ENCODE measurements at regions of chr2 and their contacts with region 1.

Region 1: GRCh38 chr2:99615247-99615771 is 125.5 kb upstream of the REV1 start:
- DNase-seq: peak; percentile 47
- ATAC-seq: peak; percentile 72
- H3K4me3 Mint-ChIP-seq: no peak overlapping the region
- H3K27ac Mint-ChIP-seq: no peak overlapping the region
- H3K4me1 Mint-ChIP-seq: no peaks in the 10 kb centered on the region
- H3K27me3 Mint-ChIP-seq: no peaks in the 10 kb centered on the region; the same call in 1 of the 2 replicates
- CTCF ChIP-seq: no peak

Region 2: DNA sequence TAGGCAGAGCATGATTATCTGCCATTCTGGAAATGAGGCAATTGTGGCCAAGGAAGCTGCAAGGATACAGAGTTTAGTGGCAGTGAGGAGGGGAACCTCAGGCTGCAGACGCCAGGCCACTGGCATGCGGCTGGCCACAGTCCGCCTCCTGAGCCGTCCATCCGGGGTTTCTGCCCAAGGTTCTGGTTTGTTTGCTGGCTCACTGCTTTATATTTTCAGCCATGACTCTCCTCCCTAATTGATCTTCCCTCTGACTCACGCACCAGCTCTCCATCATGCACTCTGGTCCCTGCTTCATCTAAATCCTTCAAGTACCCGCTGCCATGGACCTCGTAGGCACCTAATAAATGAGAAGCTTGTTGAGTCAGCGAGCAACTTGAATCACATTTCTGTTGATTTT is 17.7 kb before region 1 on chr2:
- CTCF ChIA-PET with region 1: interaction called, 15 read pairs
- POLR2A ChIA-PET with region 1: no interaction called
- DNase-seq: no peak
- ATAC-seq: no peak
- H3K4me3 Mint-ChIP-seq: no peak overlapping the region
- H3K27ac Mint-ChIP-seq: no peak overlapping the region
- H3K4me1 Mint-ChIP-seq: 0 out of 2 replicates have a peak, but pooled peaks cover 6% of the 10 kb centered on the region
- H3K27me3 Mint-ChIP-seq: no peaks in the 10 kb centered on the region
- CTCF ChIP-seq: no peak

Region 3: GRCh38 chr2:99636144-99637034 is 21.1 kb after region 1 on chr2:
- CTCF ChIA-PET with region 1: no interaction called
- POLR2A ChIA-PET with region 1: no interaction called
- DNase-seq: no peak
- ATAC-seq: no peak
- H3K4me3 Mint-ChIP-seq: no peak overlapping the region
- H3K27ac Mint-ChIP-seq: no peak overlapping the region
- H3K4me1 Mint-ChIP-seq: no peaks in the 10 kb centered on the region
- H3K27me3 Mint-ChIP-seq: no peaks in the 10 kb centered on the region
- CTCF ChIP-seq: no peak

Measured in WTC11 (cell line).